IMR-90 (cell line): ENCODE measurements at regions of chr5 and their contacts with region 1.

Region 1: GRCh38 chr5:32232441-32233219 is 58.5 kb upstream of the GOLPH3 start:
- DNase-seq: peak; percentile 63
- ATAC-seq: peak; percentile 88
- H3K4me3 ChIP-seq: no peak overlapping the region
- H3K27ac ChIP-seq: no peak overlapping the region
- H3K4me1 ChIP-seq: peaks cover 9% of the 10 kb centered on the region
- H3K27me3 ChIP-seq: no peaks in the 10 kb centered on the region
- CTCF ChIP-seq: peak; percentile 74
- POLR2A ChIP-seq: no peak
- RAD21 ChIP-seq: peak; percentile 77

Region 2: GRCh38 chr5:32312647-32313523 is 80.3 kb after region 1 on chr5 and contains the start of gene MTMR12:
- CTCF ChIA-PET with region 1: no interaction called
- POLR2A ChIA-PET with region 1: no interaction called
- dilution Hi-C with region 1: no loop called
- in situ Hi-C with region 1: no loop called
- intact Hi-C with region 1: loop called (anchors 5 kb)
- DNase-seq: peak; percentile 99
- ATAC-seq: peak; percentile 95
- H3K4me3 ChIP-seq: peak within 1 kb of the TSS; percentile 66
- H3K27ac ChIP-seq: peak within 1 kb of the TSS; percentile 72
- H3K4me1 ChIP-seq: peaks cover 5% of the 10 kb centered on the region
- H3K27me3 ChIP-seq: no peaks in the 10 kb centered on the region
- CTCF ChIP-seq: no peak
- POLR2A ChIP-seq: peak; percentile 87
- RAD21 ChIP-seq: no peak
- total RNA-seq, gene MTMR12: 20.3 and 21.3 TPM in 2 replicates

Region 3: GRCh38 chr5:32390819-32391591 is 158.4 kb after region 1 on chr5:
- CTCF ChIA-PET with region 1: interaction called, 4 read pairs
- POLR2A ChIA-PET with region 1: no interaction called
- dilution Hi-C with region 1: no loop called
- in situ Hi-C with region 1: no loop called
- intact Hi-C with region 1: loop called (anchors 5 kb)
- DNase-seq: peak; percentile 95
- ATAC-seq: peak; percentile 91
- H3K4me3 ChIP-seq: no peak overlapping the region
- H3K27ac ChIP-seq: peak overlapping the region; percentile 19; the same call in 1 of the 2 replicates
- H3K4me1 ChIP-seq: peaks cover 10% of the 10 kb centered on the region
- H3K27me3 ChIP-seq: no peaks in the 10 kb centered on the region
- CTCF ChIP-seq: no peak
- POLR2A ChIP-seq: no peak
- RAD21 ChIP-seq: no peak

Region 4: GRCh38 chr5:32585446-32586275 is 353.0 kb after region 1 on chr5 and contains the start of gene SUB1:
- CTCF ChIA-PET with region 1: interaction called, 8 read pairs
- POLR2A ChIA-PET with region 1: no interaction called
- dilution Hi-C with region 1: no loop called
- in situ Hi-C with region 1: no loop called
- intact Hi-C with region 1: loop called (anchors 5 kb)
- DNase-seq: peak; percentile 90
- ATAC-seq: peak; percentile 86
- H3K4me3 ChIP-seq: peak within 1 kb of the TSS; percentile 89
- H3K27ac ChIP-seq: peak within 1 kb of the TSS; percentile 91
- H3K4me1 ChIP-seq: peaks cover 4% of the 10 kb centered on the region
- H3K27me3 ChIP-seq: no peaks in the 10 kb centered on the region
- CTCF ChIP-seq: 0 out of 2 replicates have a peak, but pooled peaks have one; percentile 18
- POLR2A ChIP-seq: peak; percentile 92
- RAD21 ChIP-seq: no peak; the same call in 1 of the 2 replicates
- total RNA-seq, gene SUB1: 19.5 and 90.5 TPM in 2 replicates

Region 5: GRCh38 chr5:32690153-32690552 is 457.5 kb after region 1 on chr5:
- CTCF ChIA-PET with region 1: no interaction called
- POLR2A ChIA-PET with region 1: no interaction called
- dilution Hi-C with region 1: no loop called
- in situ Hi-C with region 1: no loop called
- intact Hi-C with region 1: loop called (anchors 5 kb)
- DNase-seq: no peak
- ATAC-seq: no peak
- H3K4me3 ChIP-seq: no peak overlapping the region
- H3K27ac ChIP-seq: no peak overlapping the region
- H3K4me1 ChIP-seq: peaks cover 9% of the 10 kb centered on the region
- H3K27me3 ChIP-seq: no peaks in the 10 kb centered on the region
- CTCF ChIP-seq: 0 out of 2 replicates have a peak, but pooled peaks have one; percentile 16
- POLR2A ChIP-seq: no peak
- RAD21 ChIP-seq: no peak; the same call in 1 of the 2 replicates